BJ (cell line): ENCODE measurements at regions of chr17 and their contacts with region 1.

Region 1: DNA sequence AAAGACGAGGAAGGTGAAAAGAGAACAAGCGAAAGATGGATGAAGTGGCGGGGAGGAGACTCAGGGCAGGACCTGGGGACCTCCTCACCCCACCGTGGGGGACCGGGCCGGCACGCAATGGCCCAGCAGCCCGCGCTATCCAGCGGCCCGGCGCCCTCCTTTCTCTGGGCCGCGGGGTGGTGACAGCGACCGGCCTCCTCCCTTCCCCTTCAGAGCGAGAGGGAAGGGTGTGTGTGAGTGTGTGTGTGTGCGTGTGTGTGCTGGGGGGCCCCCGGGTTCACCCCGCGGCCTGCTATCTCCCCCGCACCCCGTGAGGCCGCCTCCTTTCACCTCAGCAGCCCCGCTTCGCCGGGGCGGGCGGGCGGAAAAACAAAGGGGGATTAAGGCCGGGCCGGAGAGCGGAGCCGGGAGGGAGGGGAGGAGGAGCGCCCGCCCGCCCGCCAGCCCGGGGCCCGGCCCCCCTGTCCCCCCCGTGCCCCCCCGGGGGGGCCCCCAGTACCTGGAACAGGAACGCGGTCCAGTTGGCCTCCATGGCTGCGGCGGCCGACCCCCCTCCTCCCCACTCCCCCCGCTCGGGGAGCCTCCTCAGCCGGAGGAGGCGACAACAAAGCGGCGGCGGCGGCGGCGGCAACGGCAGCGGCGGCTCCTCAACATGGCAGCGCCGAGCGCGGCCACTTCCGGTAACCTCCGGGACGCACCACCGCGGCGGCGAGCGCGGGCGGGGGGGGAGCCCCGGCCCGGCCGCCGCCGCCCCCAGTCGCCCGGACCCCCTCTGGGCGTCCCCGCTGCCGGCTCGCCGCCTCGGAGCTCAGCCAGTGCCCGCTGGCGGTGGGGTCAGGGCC is at the start of gene VEZF1:
- DNase-seq: no peak
- H3K4me3 ChIP-seq: peak within 1 kb of the TSS; percentile 79
- H3K27me3 ChIP-seq: no peaks in the 10 kb centered on the region
- CTCF ChIP-seq: no peak
- polyA plus RNA-seq, gene VEZF1: 27.3 and 30.2 TPM in 2 replicates

Region 2: GRCh38 chr17:57849874-57850754 is 137.7 kb before region 1 on chr17 and contains the start of gene MRPS23:
- CTCF ChIA-PET with region 1: interaction called, 371 read pairs
- POLR2A ChIA-PET with region 1: interaction called, 4 read pairs
- DNase-seq: peak; percentile 90
- H3K4me3 ChIP-seq: peak within 1 kb of the TSS; percentile 75
- H3K27me3 ChIP-seq: no peaks in the 10 kb centered on the region
- CTCF ChIP-seq: no peak
- polyA plus RNA-seq, gene MRPS23: 33.7 and 34.1 TPM in 2 replicates

Region 3: DNA sequence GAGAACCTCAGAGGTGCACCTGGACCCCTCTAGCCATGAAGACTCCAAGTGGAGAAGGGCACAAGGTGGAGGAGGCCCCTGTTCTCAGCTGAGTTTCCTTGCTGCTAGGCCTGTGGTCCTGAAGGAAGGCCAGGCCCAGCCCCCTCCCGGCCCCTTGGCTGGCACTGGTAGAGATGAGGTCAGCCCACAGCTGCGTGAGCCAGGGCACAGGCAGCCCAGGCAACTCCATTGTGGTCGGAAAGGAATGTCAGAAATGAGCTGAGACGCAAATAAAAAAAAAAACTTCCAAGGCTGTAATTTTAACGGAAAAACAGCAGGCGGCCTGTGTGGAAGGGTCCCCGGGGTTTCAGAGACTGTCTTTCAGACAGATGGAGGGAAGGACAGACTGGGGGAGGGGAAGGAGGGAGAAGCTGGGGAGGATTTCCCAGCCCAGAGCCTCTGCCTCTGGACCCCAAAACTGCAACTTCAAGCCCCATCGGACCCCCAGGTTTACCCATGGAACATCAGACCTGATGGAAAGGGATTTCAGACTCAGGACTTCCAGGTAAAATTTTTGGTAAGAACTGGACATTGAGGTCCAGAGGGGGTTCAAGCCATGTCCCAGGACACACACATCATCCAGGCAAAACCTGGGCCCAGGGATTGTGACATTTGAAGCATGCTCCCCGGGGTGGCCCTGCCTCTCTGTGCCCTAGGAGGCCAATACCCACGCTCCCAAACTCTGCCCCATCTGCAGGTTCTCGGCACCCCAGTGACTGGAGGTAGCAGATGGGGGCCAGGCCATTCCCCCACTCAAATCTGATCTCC is 112.3 kb before region 1 on chr17:
- CTCF ChIA-PET with region 1: interaction called, 20 read pairs
- POLR2A ChIA-PET with region 1: interaction called, 12 read pairs
- DNase-seq: peak; percentile 90
- H3K4me3 ChIP-seq: 0 out of 2 replicates have a peak overlapping the region, but pooled peaks have one; percentile 7
- H3K27me3 ChIP-seq: no peaks in the 10 kb centered on the region
- CTCF ChIP-seq: peak; percentile 73

Region 4: GRCh38 chr17:57946798-57947358 is 40.9 kb before region 1 on chr17:
- CTCF ChIA-PET with region 1: interaction called, 6 read pairs
- POLR2A ChIA-PET with region 1: interaction called, 11 read pairs
- DNase-seq: no peak
- H3K4me3 ChIP-seq: peak overlapping the region; percentile 37
- H3K27me3 ChIP-seq: no peaks in the 10 kb centered on the region
- CTCF ChIP-seq: no peak

Region 5: DNA sequence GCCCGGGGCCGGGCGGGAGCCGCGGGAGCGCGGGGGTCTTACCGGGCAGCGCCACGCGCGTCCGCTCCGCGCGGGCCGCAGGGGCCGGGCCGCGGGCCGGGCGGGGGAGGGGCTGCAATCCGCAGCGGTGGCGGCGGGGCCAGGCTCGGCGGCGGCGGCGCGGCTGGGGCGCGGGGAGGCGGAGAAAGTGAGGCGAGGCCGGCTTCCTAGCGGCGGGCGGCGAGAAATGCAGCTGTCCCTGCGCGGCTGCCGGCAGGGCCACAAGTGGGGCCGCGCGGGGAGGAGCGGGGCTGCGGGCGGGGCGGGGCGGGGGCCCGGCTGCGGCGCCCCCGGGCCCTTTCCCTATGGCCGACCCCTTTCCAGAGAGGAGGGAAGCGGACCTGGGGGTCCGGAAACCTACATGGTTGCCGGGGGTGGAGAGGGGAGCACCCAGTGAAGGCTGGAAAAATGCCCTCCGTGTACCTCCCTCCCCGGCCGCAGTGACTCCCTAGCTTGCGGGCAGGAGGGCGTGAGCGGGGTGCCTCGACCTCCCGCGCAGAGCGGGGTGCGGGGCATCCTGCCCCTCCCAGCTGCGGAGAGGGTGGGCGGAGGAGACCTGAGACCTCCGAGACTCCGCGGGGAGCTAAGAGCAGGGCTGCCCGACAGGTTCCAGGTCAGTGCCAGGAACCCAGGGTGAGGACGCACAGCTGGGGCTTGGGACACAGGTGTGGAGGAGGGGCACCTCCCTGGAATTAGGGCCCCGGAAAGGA is 32.4 kb before region 1 on chr17 and contains the start of gene CUEDC1:
- CTCF ChIA-PET with region 1: interaction called, 20 read pairs
- POLR2A ChIA-PET with region 1: interaction called, 3 read pairs
- DNase-seq: no peak
- H3K4me3 ChIP-seq: peak within 1 kb of the TSS; percentile 69
- H3K27me3 ChIP-seq: no peaks in the 10 kb centered on the region
- CTCF ChIP-seq: 0 out of 2 replicates have a peak, but pooled peaks have one; percentile 26
- polyA plus RNA-seq, gene CUEDC1: 27.3 and 48.5 TPM in 2 replicates

Region 6: GRCh38 chr17:58020401-58020800 is 32.6 kb after region 1 on chr17:
- CTCF ChIA-PET with region 1: no interaction called
- POLR2A ChIA-PET with region 1: no interaction called
- DNase-seq: no peak
- H3K4me3 ChIP-seq: no peak overlapping the region
- H3K27me3 ChIP-seq: no peaks in the 10 kb centered on the region
- CTCF ChIP-seq: no peak